ENCODE measurements at regions of chr18 and their contacts with region 1.

Region 1: DNA sequence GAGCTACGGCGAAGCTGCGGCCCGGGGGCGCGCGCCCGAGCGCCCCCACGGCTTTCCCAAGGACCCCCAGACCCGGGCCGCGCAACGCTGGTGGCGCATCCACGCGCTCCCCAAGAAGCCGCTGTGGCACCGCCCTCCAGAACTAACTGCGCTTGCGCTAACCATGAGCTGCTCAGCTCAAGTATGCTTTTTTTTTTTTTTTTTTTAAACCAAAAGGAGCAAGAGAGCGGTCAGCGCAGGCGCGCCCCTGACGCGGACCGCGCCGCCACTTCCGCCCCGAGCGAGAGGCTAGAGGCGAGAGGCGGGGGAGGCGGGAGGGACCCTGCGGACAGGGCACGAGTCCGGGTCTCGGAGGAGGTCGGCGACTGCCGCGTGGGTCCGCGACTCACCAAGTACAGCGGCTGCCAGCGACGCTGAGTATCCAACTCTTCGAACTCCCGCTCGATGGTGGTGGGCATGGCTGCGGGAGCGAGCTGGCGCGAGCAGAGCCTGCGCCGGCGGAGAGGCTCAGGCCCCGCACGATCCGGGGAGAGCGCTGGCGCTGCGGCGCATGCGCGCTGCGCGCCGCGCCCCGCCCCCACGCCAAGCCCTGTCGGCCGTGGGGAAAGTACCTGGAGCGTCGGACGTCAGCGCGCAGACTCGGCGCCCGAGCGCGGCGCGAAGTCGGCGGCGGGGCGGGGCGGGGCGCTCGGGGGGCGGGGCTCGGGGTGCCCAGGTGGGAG is at the start of gene PTPN2:
- DNase-seq: peak; percentile 86 to 95
- H3K4me3 ChIP-seq: peak within 1 kb of the TSS; percentile 99
- H3K27ac ChIP-seq: peak within 1 kb of the TSS; percentile 95
- H3K4me1 ChIP-seq: peaks cover 33% of the 10 kb centered on the region
- H3K27me3 ChIP-seq: no peaks in the 10 kb centered on the region
- CTCF ChIP-seq: no peak
- total RNA-seq, gene PTPN2: 77.2 and 78.1 TPM in 2 replicates

Region 2: GRCh38 chr18:12278215-12278671 is 605.6 kb before region 1 on chr18:
- CTCF ChIA-PET with region 1: no interaction called
- POLR2A ChIA-PET with region 1: interaction called, 13 read pairs
- intact Hi-C with region 1: no loop called
- DNase-seq: no peak
- H3K4me3 ChIP-seq: no peak overlapping the region
- H3K27ac ChIP-seq: no peak overlapping the region
- H3K4me1 ChIP-seq: 0 out of 2 replicates have a peak, but pooled peaks cover 6% of the 10 kb centered on the region
- H3K27me3 ChIP-seq: no peaks in the 10 kb centered on the region
- CTCF ChIP-seq: peak; percentile 47; the same call in 1 of the 2 replicates

Region 3: DNA sequence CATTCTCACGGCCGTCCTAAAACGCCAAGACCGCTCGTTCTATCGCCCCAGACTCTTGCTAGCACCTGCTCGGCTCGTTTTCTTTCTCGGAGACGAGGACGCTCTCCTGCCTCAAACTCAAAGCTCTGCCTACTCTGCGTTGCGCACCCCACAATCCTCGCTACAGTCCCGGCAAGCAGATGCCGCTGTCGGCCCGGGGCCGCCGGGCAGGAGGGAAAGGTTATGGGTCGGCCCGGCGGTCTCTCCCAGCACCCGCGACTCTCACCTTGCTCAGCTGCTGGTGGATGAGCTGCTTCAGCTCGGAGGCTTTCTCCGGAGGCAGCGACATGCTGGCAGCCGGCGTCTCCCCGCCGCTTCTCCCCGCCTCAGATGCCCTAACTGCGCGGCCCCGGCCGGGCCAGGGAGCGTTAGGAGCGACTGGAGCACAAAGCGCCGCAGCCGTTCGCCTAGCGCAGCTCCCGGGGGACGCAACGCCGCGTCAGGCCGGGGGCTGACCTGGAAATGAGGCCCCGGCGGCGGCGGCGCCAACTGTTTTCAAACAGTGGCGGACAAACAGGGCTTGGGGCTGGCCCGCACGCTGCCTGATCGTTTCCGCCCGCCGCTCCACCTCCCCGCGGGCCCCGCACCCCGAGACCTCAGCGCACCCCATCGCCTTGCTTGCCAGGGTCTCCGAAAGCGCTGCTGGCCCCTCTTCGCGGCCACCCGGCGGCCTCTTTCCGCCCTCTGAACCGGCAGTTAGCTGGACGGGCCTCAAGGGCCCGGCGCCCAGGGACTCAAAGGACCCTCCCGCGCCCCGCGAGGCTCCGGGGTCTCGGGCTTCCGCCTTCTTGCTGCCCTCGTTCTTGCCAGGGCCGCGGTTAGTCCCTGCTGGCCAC is 181.4 kb before region 1 on chr18 and contains the starts of genes CEP76 and PSMG2:
- CTCF ChIA-PET with region 1: no interaction called
- POLR2A ChIA-PET with region 1: interaction called, 13 read pairs
- intact Hi-C with region 1: no loop called
- DNase-seq: peak; percentile 61 to 90
- H3K4me3 ChIP-seq: peak within 1 kb of the TSS; percentile 81
- H3K27ac ChIP-seq: peak within 1 kb of the TSS; percentile 92
- H3K4me1 ChIP-seq: peaks cover 31% of the 10 kb centered on the region
- H3K27me3 ChIP-seq: no peaks in the 10 kb centered on the region
- CTCF ChIP-seq: no peak
- total RNA-seq, gene CEP76: 14.5 and 15.1 TPM in 2 replicates
- total RNA-seq, gene PSMG2: 107 and 123 TPM in 2 replicates

Region 4: DNA sequence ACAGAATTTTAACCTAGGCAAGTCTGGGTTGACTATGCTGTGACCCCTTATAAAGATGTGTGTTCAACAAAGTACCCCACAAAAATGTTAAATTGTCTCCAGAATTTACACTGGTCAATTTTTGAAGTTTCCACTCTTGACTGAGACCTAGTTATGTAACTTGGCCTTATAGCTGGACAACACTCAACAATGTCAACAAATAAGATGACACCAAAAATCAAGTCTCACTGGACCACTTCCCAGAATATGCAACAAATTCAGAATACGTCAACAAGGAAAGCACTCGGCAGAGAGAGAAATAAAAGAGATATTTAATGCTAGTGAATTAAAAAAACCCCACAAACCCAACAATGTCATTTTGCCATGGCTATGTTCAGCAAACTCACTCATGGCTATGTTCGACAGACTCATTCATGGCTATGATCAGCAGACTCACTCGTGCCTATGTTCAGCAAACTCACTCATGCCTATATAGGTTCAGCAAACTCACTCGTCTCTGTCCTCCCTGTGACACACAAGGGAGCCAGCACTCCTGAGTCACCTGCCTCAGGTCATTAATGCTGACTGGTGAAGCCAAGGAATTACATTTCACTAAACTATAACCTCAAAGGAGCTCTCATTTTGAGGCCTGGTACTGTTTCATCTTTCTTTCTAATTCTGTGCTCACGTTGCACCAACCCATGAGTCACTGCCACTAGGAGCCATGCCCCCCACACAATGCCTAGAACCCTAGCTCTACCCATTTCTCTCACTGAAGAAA is 72.5 kb before region 1 on chr18:
- CTCF ChIA-PET with region 1: no interaction called
- POLR2A ChIA-PET with region 1: interaction called, 11 read pairs
- intact Hi-C with region 1: no loop called
- DNase-seq: peak; percentile 4 to 63
- H3K4me3 ChIP-seq: no peak overlapping the region
- H3K27ac ChIP-seq: peak overlapping the region; percentile 57
- H3K4me1 ChIP-seq: peaks cover 15% of the 10 kb centered on the region
- H3K27me3 ChIP-seq: no peaks in the 10 kb centered on the region
- CTCF ChIP-seq: no peak

Region 5: GRCh38 chr18:12838178-12838634 is 45.6 kb before region 1 on chr18:
- CTCF ChIA-PET with region 1: interaction called, 3 read pairs
- POLR2A ChIA-PET with region 1: interaction called, 15 read pairs
- intact Hi-C with region 1: loop called (anchors 1 kb)
- DNase-seq: peak; percentile 92 to 99
- H3K4me3 ChIP-seq: peak overlapping the region; percentile 45; the same call in 1 of the 2 replicates
- H3K27ac ChIP-seq: peak overlapping the region; percentile 100
- H3K4me1 ChIP-seq: peaks cover 53% of the 10 kb centered on the region
- H3K27me3 ChIP-seq: no peaks in the 10 kb centered on the region
- CTCF ChIP-seq: no peak

Region 6: GRCh38 chr18:12851716-12852115 is 32.1 kb before region 1 on chr18:
- CTCF ChIA-PET with region 1: no interaction called
- POLR2A ChIA-PET with region 1: no interaction called
- intact Hi-C with region 1: no loop called
- DNase-seq: no peak
- H3K4me3 ChIP-seq: no peak overlapping the region
- H3K27ac ChIP-seq: peak overlapping the region; percentile 28; the same call in 1 of the 2 replicates
- H3K4me1 ChIP-seq: peaks cover 54% of the 10 kb centered on the region
- H3K27me3 ChIP-seq: no peaks in the 10 kb centered on the region
- CTCF ChIP-seq: no peak

Region 7: GRCh38 chr18:12862467-12862866 is 21.4 kb before region 1 on chr18:
- CTCF ChIA-PET with region 1: no interaction called
- POLR2A ChIA-PET with region 1: interaction called, 35 read pairs
- intact Hi-C with region 1: loop called (anchors 1 kb)
- DNase-seq: peak; percentile 87 to 88
- H3K4me3 ChIP-seq: no peak overlapping the region
- H3K27ac ChIP-seq: peak overlapping the region; percentile 85
- H3K4me1 ChIP-seq: peaks cover 32% of the 10 kb centered on the region
- H3K27me3 ChIP-seq: no peaks in the 10 kb centered on the region
- CTCF ChIP-seq: no peak

Region 8: GRCh38 chr18:12947355-12948041 is 63.7 kb after region 1 on chr18 and contains the start of gene SEH1L:
- CTCF ChIA-PET with region 1: no interaction called
- POLR2A ChIA-PET with region 1: interaction called, 3 read pairs
- intact Hi-C with region 1: loop called (anchors 5 kb)
- DNase-seq: peak; percentile 81 to 98
- H3K4me3 ChIP-seq: peak within 1 kb of the TSS; percentile 98
- H3K27ac ChIP-seq: peak within 1 kb of the TSS; percentile 95
- H3K4me1 ChIP-seq: peaks cover 32% of the 10 kb centered on the region
- H3K27me3 ChIP-seq: no peaks in the 10 kb centered on the region
- CTCF ChIP-seq: no peak
- total RNA-seq, gene SEH1L: 98.3 and 101 TPM in 2 replicates

Measured in PC-9 (cell line).